ENCODE measurements at regions of chr16 and their contacts with region 1.

Region 1: DNA sequence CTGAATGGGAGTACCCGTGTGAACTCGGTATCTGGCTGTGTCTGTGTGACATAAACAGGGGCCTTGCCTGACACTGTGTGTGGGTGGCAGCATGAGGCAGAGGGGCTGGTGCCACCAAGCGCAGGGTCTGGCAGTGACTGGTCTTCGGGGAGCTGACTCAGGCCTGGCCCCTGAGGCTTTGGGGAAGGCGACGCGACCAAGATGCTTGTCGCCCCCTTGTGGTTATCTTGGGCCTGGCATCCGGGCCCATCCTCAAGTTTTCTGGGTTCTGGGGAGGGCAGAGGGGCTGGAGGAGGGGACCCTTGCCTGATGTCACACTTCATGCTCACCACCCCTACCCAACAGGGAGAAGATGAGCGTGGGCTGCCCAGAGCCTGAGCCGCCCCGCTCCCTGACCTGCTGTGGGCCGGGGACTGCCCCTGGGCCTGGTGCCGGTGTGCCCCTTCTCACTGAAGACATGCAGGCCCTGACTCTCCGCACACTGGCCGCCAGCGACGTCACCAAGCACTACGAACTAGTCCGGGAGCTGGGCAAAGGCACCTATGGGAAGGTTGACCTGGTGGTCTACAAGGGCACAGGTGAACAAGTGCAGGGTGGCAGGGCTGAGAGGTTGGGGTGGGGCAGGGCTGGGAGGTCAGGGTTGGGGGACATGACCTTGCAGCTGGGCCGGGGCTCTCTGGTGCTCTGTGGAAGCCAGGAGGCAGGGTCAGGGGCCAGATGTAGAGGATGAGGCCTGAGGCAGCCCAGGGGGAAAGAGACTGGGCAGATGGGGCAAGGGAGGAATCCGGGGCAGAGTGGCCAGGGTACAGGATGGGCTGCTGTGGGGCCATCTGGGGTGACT is 24.9 kb downstream of the SBK1 start:
- DNase-seq: no peak
- H3K4me3 ChIP-seq: no peak overlapping the region
- H3K27me3 ChIP-seq: no peaks in the 10 kb centered on the region
- CTCF ChIP-seq: peak; percentile 94

Region 2: GRCh38 chr16:28277537-28278388 is 39.5 kb before region 1 on chr16:
- CTCF ChIA-PET with region 1: interaction called, 100 read pairs
- POLR2A ChIA-PET with region 1: no interaction called
- DNase-seq: no peak
- H3K4me3 ChIP-seq: peak overlapping the region; percentile 51
- H3K27me3 ChIP-seq: peaks cover 4% of the 10 kb centered on the region
- CTCF ChIP-seq: peak; percentile 94

Region 3: DNA sequence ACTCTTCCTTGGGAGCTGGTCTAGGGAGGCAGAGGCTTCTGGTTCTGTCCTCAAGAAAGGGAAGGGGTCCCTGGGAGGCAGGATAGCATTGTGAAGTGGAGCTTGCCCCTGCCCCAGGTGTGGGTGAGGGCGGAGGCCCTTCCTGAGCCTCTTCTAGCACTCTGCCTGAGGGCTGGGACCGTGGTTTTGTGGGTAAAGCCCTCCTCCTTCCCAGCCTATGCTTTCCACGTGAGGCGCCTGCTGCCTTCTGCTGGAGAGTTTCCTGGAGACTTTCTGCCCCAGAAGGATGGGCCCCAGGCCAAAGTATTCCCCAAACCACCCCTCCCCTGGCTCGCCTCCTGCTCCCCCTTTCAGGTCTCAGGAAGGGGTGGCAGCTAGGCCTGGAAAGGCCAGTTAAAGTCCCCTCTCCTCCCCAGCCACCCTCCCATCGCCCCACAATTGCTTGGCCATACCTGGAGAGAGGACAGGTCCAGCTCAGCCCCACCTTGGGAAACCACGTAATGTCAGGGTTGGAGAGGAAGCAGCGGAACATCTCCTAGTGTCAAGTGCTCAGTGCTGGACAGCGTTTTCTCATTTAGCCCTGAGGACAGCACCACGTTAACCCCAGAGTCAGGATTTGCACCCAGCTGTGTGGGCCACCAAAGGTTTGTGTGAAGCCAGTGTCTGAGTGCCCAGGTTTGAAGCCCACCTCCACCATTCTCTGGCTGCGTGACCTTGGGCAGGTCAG is 19.3 kb before region 1 on chr16:
- CTCF ChIA-PET with region 1: interaction called, 12 read pairs
- POLR2A ChIA-PET with region 1: no interaction called
- DNase-seq: no peak
- H3K4me3 ChIP-seq: no peak overlapping the region
- H3K27me3 ChIP-seq: peaks cover 25% of the 10 kb centered on the region
- CTCF ChIP-seq: no peak

Region 4: DNA sequence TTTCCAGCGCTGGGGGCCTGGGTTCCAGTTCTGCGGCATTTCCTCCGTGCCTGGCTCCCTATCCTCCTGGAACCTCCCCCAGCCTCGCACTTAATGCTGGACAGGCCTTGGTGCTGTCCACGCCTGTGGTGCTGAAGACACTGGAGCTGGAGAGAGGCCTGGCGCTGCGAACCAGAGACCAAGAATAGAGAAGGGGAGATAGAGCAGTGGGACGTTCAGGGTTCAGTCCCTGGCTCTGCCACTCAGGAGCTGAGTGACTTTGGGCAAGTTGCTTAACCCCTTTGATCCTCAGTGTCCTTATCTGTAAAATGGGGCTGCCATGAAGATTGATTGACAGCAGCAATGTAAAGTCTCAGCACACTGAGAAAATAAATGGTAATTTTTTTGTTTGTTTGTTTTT is 13.0 kb before region 1 on chr16:
- CTCF ChIA-PET with region 1: interaction called, 11 read pairs
- POLR2A ChIA-PET with region 1: no interaction called
- DNase-seq: no peak
- H3K4me3 ChIP-seq: no peak overlapping the region
- H3K27me3 ChIP-seq: peaks cover 6% of the 10 kb centered on the region
- CTCF ChIP-seq: no peak